PC-9 (cell line): ENCODE measurements at regions of chr3 and their contacts with region 1.

Region 1: GRCh38 chr3:138923531-138923994 is 23.4 kb downstream of the FOXL2 start:
- DNase-seq: peak; percentile 67 to 85
- H3K4me3 ChIP-seq: no peak overlapping the region
- H3K27ac ChIP-seq: no peak overlapping the region
- H3K4me1 ChIP-seq: peaks cover 30% of the 10 kb centered on the region
- H3K27me3 ChIP-seq: no peaks in the 10 kb centered on the region
- CTCF ChIP-seq: peak; percentile 92

Region 2: DNA sequence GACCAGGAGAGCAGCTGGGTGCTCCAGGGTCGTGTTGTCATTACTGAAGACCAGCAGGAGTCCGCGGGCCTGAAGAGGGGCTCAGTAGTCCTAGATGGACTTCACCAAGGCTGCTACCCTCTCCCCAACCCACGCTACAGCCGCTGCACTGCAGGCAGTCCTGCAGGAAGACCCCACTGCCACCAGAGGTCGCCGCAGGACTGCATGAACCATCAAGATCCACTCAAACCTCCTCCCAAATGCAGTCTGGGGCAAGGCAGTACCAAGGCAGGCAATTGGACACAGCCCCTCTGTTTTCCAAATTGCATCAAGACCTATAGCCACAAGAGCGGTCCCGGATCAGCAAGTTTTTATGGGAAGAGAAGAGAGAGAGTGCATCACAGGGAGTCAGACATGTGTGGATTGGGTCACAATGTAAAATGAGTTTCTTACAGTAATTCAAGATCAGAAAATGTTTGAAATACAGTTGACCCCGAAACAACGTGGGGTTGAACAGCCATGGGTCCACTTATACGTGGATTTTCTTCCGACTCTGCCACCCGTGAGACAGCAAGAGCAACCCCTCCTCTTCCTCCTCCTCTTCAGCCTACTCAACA is 854.9 kb before region 1 on chr3:
- CTCF ChIA-PET with region 1: no interaction called
- POLR2A ChIA-PET with region 1: no interaction called
- intact Hi-C with region 1: loop called (anchors 5 kb)
- DNase-seq: peak in 1 of 2 experiments; percentile 72
- H3K4me3 ChIP-seq: no peak overlapping the region
- H3K27ac ChIP-seq: no peak overlapping the region
- H3K4me1 ChIP-seq: no peaks in the 10 kb centered on the region
- H3K27me3 ChIP-seq: no peaks in the 10 kb centered on the region
- CTCF ChIP-seq: peak; percentile 97

Region 3: GRCh38 chr3:138186803-138187295 is 736.7 kb before region 1 on chr3:
- CTCF ChIA-PET with region 1: interaction called, 3 read pairs
- POLR2A ChIA-PET with region 1: interaction called, 4 read pairs
- intact Hi-C with region 1: loop called (anchors 2 kb)
- DNase-seq: peak in 1 of 2 experiments; percentile 88
- H3K4me3 ChIP-seq: peak overlapping the region; percentile 90
- H3K27ac ChIP-seq: peak overlapping the region; percentile 76
- H3K4me1 ChIP-seq: peaks cover 28% of the 10 kb centered on the region
- H3K27me3 ChIP-seq: no peaks in the 10 kb centered on the region
- CTCF ChIP-seq: no peak

Region 4: GRCh38 chr3:138417559-138417982 is 506.0 kb before region 1 on chr3:
- CTCF ChIA-PET with region 1: interaction called, 4 read pairs
- POLR2A ChIA-PET with region 1: no interaction called
- intact Hi-C with region 1: loop called (anchors 1 kb)
- DNase-seq: peak; percentile 54 to 83
- H3K4me3 ChIP-seq: no peak overlapping the region
- H3K27ac ChIP-seq: no peak overlapping the region
- H3K4me1 ChIP-seq: no peaks in the 10 kb centered on the region
- H3K27me3 ChIP-seq: no peaks in the 10 kb centered on the region
- CTCF ChIP-seq: peak; percentile 88

Region 5: DNA sequence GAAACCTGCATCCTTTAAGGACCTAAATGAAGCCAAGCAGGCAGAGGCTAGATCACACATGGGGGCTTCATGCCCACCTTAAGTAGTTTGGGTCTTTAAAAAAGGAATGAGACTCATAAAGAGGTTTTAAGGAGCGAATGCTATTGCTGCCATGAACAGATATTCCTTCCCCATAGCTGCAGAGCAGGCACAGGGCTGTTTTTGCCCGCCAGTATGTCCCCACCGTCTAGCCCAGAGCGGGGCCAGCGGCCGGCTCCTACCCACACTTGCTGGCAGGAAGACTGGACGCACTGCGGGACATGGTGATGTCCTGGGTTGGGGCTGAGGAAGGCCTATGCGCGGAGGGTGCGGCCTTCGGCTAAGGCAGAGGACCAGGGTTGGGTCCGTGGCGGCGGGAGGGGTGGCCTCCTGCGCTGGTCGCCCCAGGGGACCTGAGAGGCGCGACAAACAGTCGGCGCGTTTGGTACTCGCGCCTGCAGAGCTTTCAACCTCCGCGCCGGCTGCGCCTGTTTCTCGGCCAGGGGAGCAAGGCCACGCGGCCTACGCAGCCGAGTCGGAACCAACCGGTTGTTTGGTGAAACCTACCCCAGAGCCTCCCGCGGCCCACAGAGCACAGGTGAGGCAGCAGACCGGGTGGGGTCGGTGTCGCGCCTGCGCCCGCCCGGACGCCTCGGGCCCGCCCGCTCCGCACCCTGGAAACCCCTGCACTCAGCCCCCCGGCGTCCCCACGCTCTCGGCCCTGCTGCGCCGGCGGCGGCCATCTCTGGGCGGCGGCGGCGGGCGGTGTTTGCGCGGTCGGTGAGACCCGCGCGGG is 315.0 kb before region 1 on chr3 and contains the start of gene FAIM:
- CTCF ChIA-PET with region 1: no interaction called
- POLR2A ChIA-PET with region 1: no interaction called
- intact Hi-C with region 1: no loop called
- DNase-seq: peak; percentile 47 to 82
- H3K4me3 ChIP-seq: peak within 1 kb of the TSS; percentile 85
- H3K27ac ChIP-seq: peak within 1 kb of the TSS; percentile 82
- H3K4me1 ChIP-seq: peaks cover 14% of the 10 kb centered on the region; the same call in 1 of the 2 replicates
- H3K27me3 ChIP-seq: no peaks in the 10 kb centered on the region
- CTCF ChIP-seq: no peak
- total RNA-seq, gene FAIM: 17.7 and 18.6 TPM in 2 replicates

Region 6: DNA sequence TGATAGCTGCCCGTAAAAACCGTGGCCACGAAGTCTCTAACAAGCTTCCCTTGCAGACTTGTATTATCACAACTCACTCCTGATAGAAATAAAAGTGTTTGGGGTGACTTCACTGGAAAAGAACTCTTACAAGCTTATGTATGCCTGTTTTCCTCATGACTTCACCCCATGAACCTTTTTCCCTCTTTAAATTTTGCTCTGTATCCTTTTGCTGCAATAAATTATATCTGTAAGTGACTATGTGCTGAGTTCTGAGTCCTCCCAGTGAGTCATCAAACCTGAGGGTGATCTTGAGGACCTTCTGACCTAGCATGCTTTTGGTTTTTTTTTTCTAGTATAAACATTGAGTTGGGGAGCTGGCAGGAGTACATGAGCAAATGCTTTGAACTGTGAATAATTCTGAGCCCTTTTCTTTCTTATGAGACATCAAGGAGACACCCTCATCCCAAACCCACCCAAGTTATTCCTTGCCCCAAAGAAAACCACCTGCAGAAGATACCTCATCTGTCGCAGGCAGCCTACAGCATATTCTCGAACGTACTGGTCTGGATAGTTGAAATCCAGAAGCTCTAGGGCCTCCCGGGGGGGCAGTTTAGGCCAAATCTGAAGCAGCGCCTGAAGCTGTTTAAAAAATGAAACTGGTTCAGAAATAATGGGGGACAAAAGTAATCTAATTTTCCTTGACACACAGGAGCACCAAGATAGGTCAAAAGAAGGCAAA is 229.1 kb before region 1 on chr3:
- CTCF ChIA-PET with region 1: interaction called, 11 read pairs
- POLR2A ChIA-PET with region 1: no interaction called
- intact Hi-C with region 1: loop called (anchors 1 kb)
- DNase-seq: peak; percentile 52 to 94
- H3K4me3 ChIP-seq: no peak overlapping the region
- H3K27ac ChIP-seq: peak overlapping the region; percentile 71
- H3K4me1 ChIP-seq: peaks cover 26% of the 10 kb centered on the region
- H3K27me3 ChIP-seq: no peaks in the 10 kb centered on the region
- CTCF ChIP-seq: no peak

Region 7: DNA sequence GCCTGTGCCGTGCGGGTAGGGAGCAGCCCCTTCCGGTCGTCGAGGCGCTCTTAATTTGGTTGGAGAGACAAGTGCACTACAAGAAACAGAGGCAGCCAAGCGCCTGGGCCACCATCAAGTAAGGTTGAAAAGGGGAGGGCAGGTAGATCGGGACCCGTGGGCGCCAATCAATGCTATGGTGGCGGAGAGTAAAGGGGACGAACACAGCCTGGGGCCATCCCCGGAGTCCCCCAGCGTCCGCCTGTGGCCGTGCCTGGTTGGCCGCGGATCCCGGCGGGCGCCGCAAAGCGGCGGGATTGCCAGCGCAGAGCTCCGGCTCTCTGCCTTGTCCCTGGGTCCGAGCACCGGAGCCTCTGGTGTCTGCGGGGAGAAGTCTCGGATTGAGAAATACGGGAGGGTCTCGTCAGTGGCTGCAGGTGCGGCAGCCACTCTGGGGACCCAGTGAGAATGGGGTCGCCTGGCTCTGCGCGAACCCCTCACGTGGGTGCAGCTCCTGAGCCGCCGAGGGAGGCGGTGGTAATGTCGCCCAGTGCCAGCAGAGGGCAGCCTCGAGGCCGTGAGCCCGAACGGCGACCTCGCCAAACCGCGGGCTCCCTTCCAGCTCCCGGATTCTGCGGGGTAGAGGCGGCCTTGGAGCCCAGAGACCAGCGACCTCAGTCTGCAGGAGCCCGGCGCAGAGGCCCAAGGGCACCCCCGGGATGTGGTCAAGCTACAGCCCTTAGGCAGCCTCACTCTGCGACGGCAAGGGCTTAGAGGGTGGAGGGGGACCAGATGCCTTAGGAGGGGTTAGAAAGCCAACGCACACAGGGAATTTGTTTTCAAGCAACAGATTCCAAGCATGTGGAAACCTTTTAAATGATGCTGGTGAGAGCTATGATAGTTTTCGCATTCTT is 12.5 kb after region 1 on chr3:
- CTCF ChIA-PET with region 1: interaction called, 20 read pairs
- POLR2A ChIA-PET with region 1: no interaction called
- intact Hi-C with region 1: no loop called
- DNase-seq: peak in 1 of 2 experiments; percentile 81
- H3K4me3 ChIP-seq: peak overlapping the region; percentile 76
- H3K27ac ChIP-seq: no peak overlapping the region
- H3K4me1 ChIP-seq: 0 out of 2 replicates have a peak, but pooled peaks cover 6% of the 10 kb centered on the region
- H3K27me3 ChIP-seq: no peaks in the 10 kb centered on the region
- CTCF ChIP-seq: peak; percentile 88

Region 8: GRCh38 chr3:139261754-139262586 is 338.4 kb after region 1 on chr3:
- CTCF ChIA-PET with region 1: no interaction called
- POLR2A ChIA-PET with region 1: no interaction called
- intact Hi-C with region 1: no loop called
- DNase-seq: no peak
- H3K4me3 ChIP-seq: no peak overlapping the region
- H3K27ac ChIP-seq: no peak overlapping the region
- H3K4me1 ChIP-seq: no peaks in the 10 kb centered on the region
- H3K27me3 ChIP-seq: no peaks in the 10 kb centered on the region
- CTCF ChIP-seq: no peak

Region 9: GRCh38 chr3:139343895-139344856 is 420.6 kb after region 1 on chr3 and contains the start of gene MRPS22:
- CTCF ChIA-PET with region 1: no interaction called
- POLR2A ChIA-PET with region 1: no interaction called
- intact Hi-C with region 1: loop called (anchors 5 kb)
- DNase-seq: peak; percentile 80 to 82
- H3K4me3 ChIP-seq: peak within 1 kb of the TSS; percentile 83
- H3K27ac ChIP-seq: peak within 1 kb of the TSS; percentile 75
- H3K4me1 ChIP-seq: peaks cover 8% of the 10 kb centered on the region
- H3K27me3 ChIP-seq: no peaks in the 10 kb centered on the region
- CTCF ChIP-seq: no peak
- total RNA-seq, gene MRPS22: 64.8 and 68.0 TPM in 2 replicates

Region 10: GRCh38 chr3:140170612-140171011 is 1247.0 kb after region 1 on chr3:
- CTCF ChIA-PET with region 1: no interaction called
- POLR2A ChIA-PET with region 1: no interaction called
- intact Hi-C with region 1: no loop called
- DNase-seq: no peak
- H3K4me3 ChIP-seq: no peak overlapping the region
- H3K27ac ChIP-seq: no peak overlapping the region
- H3K4me1 ChIP-seq: no peaks in the 10 kb centered on the region
- H3K27me3 ChIP-seq: no peaks in the 10 kb centered on the region
- CTCF ChIP-seq: no peak